HEK293 (cell line): ENCODE measurements at regions of chr1 and their contacts with region 1.

Region 1: DNA sequence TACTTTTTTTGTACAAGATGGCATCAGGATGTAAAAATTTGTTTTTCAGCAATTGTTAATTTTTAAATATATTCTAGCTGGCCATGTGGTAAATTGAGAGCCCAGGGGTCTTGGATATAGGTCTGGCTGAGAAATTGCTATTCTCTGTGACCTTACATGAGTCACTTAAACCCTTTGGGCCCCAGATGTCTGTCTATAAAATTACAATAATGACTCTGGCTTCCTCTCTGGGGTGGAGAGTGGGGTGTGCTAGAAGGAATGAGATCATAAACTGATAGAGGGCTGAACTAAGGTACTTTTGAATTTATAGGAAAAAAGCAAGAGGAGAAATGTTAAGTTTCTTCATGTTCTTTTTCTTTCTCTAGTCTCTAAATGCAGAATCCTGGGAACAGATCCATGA is 12.4 kb upstream of the TCHH start:
- H3K4me3 ChIP-seq: no peak overlapping the region
- H3K27ac ChIP-seq: no peak overlapping the region
- H3K4me1 ChIP-seq: no peaks in the 10 kb centered on the region
- CTCF ChIP-seq: no peak

Region 2: DNA sequence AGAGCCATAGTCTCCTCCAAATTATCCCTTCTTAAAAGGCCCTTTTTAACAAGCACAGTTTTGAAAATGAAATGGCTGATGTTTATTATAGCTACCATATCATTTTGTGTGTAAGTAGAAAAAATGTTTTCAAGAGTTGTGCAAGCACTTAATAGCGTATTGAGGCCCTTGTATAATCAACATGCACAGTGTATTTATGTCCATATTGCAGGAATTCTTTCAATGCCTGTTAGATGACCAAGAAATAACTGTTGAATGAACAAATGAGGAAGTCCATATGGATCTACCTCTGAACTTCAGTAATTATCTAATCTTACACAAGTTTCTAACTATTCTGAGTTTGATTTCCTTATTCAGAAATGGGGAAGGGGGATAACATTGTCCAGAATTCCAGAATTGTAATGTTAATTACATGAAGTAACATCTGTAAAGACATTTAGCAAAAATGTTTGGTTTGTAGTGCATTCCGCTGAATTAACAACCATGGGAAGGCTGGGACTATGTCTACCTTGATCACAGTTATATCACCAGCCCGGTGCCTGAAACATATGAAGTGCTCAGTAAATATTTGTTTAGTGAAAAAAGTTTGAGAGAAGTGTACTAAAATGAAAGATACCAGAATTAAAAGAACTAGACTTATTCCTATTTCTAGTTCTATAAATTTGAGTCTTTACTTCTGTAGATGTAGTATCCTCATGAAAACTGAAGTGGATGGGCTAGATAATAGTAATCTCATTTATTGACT is 31.4 kb before region 1 on chr1:
- CTCF ChIA-PET with region 1: no interaction called
- POLR2A ChIA-PET with region 1: no interaction called
- H3K4me3 ChIP-seq: no peak overlapping the region
- H3K27ac ChIP-seq: no peak overlapping the region
- H3K4me1 ChIP-seq: no peaks in the 10 kb centered on the region
- CTCF ChIP-seq: no peak

Region 3: GRCh38 chr1:152141974-152142584 is 14.4 kb after region 1 on chr1:
- CTCF ChIA-PET with region 1: interaction called, 11 read pairs
- POLR2A ChIA-PET with region 1: no interaction called
- H3K4me3 ChIP-seq: no peak overlapping the region
- H3K27ac ChIP-seq: no peak overlapping the region
- H3K4me1 ChIP-seq: no peaks in the 10 kb centered on the region
- CTCF ChIP-seq: peak; percentile 62